Activated CD4-positive, alpha-beta memory T cell treated with anti-CD3 and anti-CD28 coated beads for 36 hours (primary cell): ENCODE measurements at regions of chr7 and their contacts with region 1.

Region 1: GRCh38 chr7:43674584-43675436 is 54.5 kb downstream of the COA1 start:
- DNase-seq: no peak
- H3K4me3 Mint-ChIP-seq: no peak overlapping the region
- H3K27ac Mint-ChIP-seq: peak overlapping the region; percentile 52
- H3K4me1 Mint-ChIP-seq: peaks cover 80% of the 10 kb centered on the region
- H3K27me3 Mint-ChIP-seq: no peaks in the 10 kb centered on the region

Region 2: DNA sequence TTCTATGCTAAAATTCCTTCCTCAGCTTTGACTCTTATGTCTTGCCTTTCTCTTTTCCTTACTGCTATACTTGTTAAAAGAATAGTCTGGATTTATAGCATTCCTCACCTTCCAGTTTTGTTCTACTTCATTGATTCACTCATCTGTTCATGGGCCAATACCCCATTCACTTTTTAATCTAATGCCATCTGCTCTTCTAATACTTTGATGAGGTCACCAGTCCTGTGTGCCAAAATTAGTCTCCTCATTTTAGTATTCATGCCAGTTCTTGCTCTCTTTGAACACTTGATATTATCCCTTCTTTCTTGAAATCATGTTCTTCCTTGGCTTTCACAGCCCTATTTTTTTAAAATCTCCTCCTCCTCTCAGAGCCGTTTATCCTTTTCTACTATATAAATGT is 72.5 kb before region 1 on chr7:
- CTCF ChIA-PET with region 1: no interaction called
- POLR2A ChIA-PET with region 1: no interaction called
- intact Hi-C with region 1: no loop called
- DNase-seq: no peak
- H3K4me3 Mint-ChIP-seq: no peak overlapping the region
- H3K27ac Mint-ChIP-seq: no peak overlapping the region
- H3K4me1 Mint-ChIP-seq: peaks cover 41% of the 10 kb centered on the region
- H3K27me3 Mint-ChIP-seq: no peaks in the 10 kb centered on the region

Region 3: GRCh38 chr7:43658718-43659548 is 15.9 kb before region 1 on chr7:
- CTCF ChIA-PET with region 1: interaction called, 3 read pairs
- POLR2A ChIA-PET with region 1: no interaction called
- intact Hi-C with region 1: loop called (anchors 2 kb)
- DNase-seq: peak; percentile 77
- H3K4me3 Mint-ChIP-seq: peak overlapping the region; percentile 53
- H3K27ac Mint-ChIP-seq: peak overlapping the region; percentile 98
- H3K4me1 Mint-ChIP-seq: peaks cover 67% of the 10 kb centered on the region
- H3K27me3 Mint-ChIP-seq: no peaks in the 10 kb centered on the region

Region 4: DNA sequence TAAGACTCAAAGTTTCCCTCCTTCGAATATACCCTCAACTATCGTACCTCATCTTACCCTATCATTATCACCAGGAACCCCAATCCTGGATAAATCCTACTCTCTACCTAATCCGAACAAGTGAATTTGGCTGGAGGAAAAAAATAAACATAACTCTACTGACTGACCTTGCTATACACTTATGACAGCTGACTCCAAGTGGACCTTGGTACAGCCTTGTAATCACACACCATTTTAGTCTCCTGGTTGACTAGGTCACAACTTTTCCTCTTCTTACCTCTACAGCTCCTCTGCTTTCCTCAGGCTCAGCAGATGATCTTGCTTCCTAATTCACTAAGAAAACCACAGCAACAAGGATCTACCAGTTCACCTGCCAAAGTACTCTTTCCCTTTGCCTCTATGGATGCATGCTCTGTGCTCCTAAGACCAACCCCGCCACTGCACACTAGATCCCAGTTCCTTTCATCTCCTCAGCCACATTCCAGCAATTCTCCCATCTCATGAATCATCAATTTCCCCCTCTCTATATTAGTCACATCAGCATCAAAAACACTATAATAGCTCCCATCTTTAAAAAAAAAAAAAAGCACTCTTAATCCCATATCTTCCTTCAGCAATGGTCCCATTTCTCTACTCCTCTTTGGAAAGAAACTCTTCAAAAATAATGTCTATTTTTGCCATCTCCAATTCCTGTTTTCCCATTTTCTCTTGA is 19.0 kb after region 1 on chr7:
- CTCF ChIA-PET with region 1: no interaction called
- POLR2A ChIA-PET with region 1: interaction called, 6 read pairs
- intact Hi-C with region 1: loop called (anchors 2 kb)
- DNase-seq: no peak
- H3K4me3 Mint-ChIP-seq: no peak overlapping the region
- H3K27ac Mint-ChIP-seq: no peak overlapping the region
- H3K4me1 Mint-ChIP-seq: peaks cover 31% of the 10 kb centered on the region
- H3K27me3 Mint-ChIP-seq: no peaks in the 10 kb centered on the region